T-cell (primary cell): ENCODE measurements at regions of chr11 and their contacts with region 1.

Region 1: GRCh38 chr11:118342503-118343161 is at the start of gene CD3D:
- DNase-seq: peak in 34 of 35 experiments; percentile 37 to 84 (median 57)
- ATAC-seq: peak; percentile 41 to 58 (median 58)
- H3K4me3 ChIP-seq: peak within 1 kb of the TSS; percentile 73 to 88
- H3K4me3 Mint-ChIP-seq: peak within 1 kb of the TSS; percentile 85 to 91 (median 87)
- H3K27ac ChIP-seq: peak within 1 kb of the TSS; percentile 97
- H3K27ac Mint-ChIP-seq: peak within 1 kb of the TSS; percentile 98 to 100
- H3K4me1 ChIP-seq: peaks cover 35 to 64% of the 10 kb centered on the region in 2 experiments
- H3K4me1 Mint-ChIP-seq: peaks cover 70 to 90% (median 72%) of the 10 kb centered on the region in 3 donors
- H3K27me3 ChIP-seq: no peaks in the 10 kb centered on the region
- H3K27me3 Mint-ChIP-seq: no peaks in the 10 kb centered on the region
- total RNA-seq, gene CD3D: 290 to 409 (median 361) TPM

Region 2: GRCh38 chr11:117970400-117971024 is 372.1 kb before region 1 on chr11:
- CTCF ChIA-PET with region 1: no interaction called
- POLR2A ChIA-PET with region 1: interaction called in 1 of 2 experiments, 12 read pairs
- DNase-seq: peak in 3 of 35 experiments; percentile 17 to 65 (median 24)
- ATAC-seq: peak; percentile 57 to 84 (median 76)
- H3K4me3 ChIP-seq: peak overlapping the region in 1 of 2 donors; percentile 32
- H3K4me3 Mint-ChIP-seq: peak overlapping the region; percentile 22 to 50 (median 25)
- H3K27ac ChIP-seq: peak overlapping the region; percentile 50
- H3K27ac Mint-ChIP-seq: peak overlapping the region; percentile 76 to 78
- H3K4me1 ChIP-seq: peaks cover 39 to 59% of the 10 kb centered on the region in 2 experiments
- H3K4me1 Mint-ChIP-seq: peaks cover 61 to 68% (median 67%) of the 10 kb centered on the region in 3 donors
- H3K27me3 ChIP-seq: no peaks in the 10 kb centered on the region
- H3K27me3 Mint-ChIP-seq: no peaks in the 10 kb centered on the region

Region 3: DNA sequence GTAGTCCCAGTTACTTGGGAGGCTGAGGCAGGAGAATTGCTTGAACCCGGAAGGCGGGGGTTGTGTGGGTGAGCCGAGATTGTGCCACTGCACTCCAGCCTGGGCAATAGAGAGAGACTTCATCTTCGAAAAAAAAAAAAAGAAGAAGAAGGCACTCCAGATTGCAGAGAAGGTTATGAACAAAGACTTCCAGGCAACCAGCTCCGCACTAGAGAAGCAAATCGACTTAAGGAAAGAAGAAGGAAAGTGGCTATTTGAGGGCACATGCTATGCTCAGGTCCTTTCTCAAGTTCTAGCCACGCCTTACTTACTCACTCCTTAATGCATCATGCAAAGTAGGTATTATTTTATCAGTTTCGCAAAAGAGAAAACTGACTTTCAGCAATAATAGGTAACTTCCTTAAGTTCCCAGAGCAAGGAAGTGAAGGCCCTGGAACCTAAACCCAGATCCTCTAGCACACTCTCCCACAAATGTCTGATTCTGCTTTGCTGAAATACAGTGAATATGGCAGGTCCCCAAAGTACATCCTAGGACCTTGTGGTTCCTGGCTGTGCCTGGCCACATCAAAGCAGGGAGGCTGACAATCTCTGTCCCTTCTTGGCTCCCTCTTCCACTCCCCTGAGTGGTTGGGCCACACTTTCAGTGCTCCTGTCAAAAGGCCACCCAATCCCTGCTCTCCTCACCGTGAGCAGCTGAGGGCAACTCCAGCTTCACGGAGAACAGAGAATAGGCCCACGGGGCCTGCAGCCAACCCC is 23.9 kb before region 1 on chr11:
- CTCF ChIA-PET with region 1: interaction called in 1 of 2 experiments, 3 read pairs
- POLR2A ChIA-PET with region 1: interaction called in 1 of 2 experiments, 10 read pairs
- DNase-seq: no peak
- ATAC-seq: no peak
- H3K4me3 ChIP-seq: no peak overlapping the region
- H3K4me3 Mint-ChIP-seq: peak overlapping the region in 1 of 3 donors; percentile 73
- H3K27ac ChIP-seq: peak overlapping the region; percentile 39
- H3K27ac Mint-ChIP-seq: peak overlapping the region; percentile 95 to 99
- H3K4me1 ChIP-seq: peaks cover 55 to 90% of the 10 kb centered on the region in 2 experiments
- H3K4me1 Mint-ChIP-seq: peaks cover 87 to 91% (median 89%) of the 10 kb centered on the region in 3 donors
- H3K27me3 ChIP-seq: no peaks in the 10 kb centered on the region
- H3K27me3 Mint-ChIP-seq: no peaks in the 10 kb centered on the region

Region 4: DNA sequence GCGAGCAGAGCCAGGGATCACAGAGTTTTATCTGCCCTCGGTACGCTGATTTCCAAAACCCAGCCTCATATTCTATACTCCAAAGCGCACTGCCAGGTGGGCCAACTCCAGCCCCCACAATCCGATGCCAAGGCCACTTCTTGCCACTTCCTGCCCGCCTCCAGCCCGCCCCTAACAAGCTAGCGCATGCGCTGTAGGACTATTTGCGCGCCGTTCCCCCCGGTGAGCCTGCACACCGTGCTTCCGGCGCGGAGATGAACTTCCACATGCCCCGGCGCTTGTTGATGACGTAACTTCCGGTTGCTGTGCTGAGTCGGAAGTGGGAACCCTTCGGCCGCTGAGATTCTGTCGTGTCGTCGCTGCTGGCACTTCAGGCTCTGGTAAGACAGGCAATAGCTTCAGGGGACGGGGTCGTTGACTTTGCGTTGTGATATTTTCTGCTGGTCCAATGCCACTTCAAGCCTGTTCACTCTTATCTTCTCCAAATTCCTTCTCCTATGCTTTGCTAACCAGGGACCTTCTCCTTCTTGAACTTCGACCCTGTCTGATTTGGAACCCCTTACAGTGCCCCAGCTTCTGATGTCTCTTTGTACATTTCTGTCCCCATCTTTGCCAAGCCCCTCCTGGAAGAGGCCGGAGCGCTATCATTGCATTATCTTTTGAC is 16.8 kb after region 1 on chr11 and contains the start of gene UBE4A:
- CTCF ChIA-PET with region 1: interaction called in 1 of 2 experiments, 7 read pairs
- POLR2A ChIA-PET with region 1: interaction called, 3 to 11 read pairs
- DNase-seq: peak; percentile 89 to 99 (median 96)
- ATAC-seq: peak; percentile 91 to 96 (median 94)
- H3K4me3 ChIP-seq: peak within 1 kb of the TSS; percentile 71 to 88
- H3K4me3 Mint-ChIP-seq: peak within 1 kb of the TSS; percentile 98 to 99 (median 99)
- H3K27ac ChIP-seq: peak within 1 kb of the TSS; percentile 82
- H3K27ac Mint-ChIP-seq: peak within 1 kb of the TSS; percentile 97 to 99
- H3K4me1 ChIP-seq: peaks cover 14 to 30% of the 10 kb centered on the region in 2 experiments
- H3K4me1 Mint-ChIP-seq: peaks cover 49 to 52% (median 50%) of the 10 kb centered on the region in 3 donors
- H3K27me3 ChIP-seq: no peaks in the 10 kb centered on the region
- H3K27me3 Mint-ChIP-seq: no peaks in the 10 kb centered on the region
- total RNA-seq, gene UBE4A: 40.7 to 44.9 (median 41.8) TPM